ENCODE measurements at regions of chr3 and their contacts with region 1.

Region 1: GRCh38 chr3:125062888-125063618 is 7.3 kb upstream of the HEG1 start:
- DNase-seq: peak; percentile 55
- ATAC-seq: peak; percentile 60

Region 2: DNA sequence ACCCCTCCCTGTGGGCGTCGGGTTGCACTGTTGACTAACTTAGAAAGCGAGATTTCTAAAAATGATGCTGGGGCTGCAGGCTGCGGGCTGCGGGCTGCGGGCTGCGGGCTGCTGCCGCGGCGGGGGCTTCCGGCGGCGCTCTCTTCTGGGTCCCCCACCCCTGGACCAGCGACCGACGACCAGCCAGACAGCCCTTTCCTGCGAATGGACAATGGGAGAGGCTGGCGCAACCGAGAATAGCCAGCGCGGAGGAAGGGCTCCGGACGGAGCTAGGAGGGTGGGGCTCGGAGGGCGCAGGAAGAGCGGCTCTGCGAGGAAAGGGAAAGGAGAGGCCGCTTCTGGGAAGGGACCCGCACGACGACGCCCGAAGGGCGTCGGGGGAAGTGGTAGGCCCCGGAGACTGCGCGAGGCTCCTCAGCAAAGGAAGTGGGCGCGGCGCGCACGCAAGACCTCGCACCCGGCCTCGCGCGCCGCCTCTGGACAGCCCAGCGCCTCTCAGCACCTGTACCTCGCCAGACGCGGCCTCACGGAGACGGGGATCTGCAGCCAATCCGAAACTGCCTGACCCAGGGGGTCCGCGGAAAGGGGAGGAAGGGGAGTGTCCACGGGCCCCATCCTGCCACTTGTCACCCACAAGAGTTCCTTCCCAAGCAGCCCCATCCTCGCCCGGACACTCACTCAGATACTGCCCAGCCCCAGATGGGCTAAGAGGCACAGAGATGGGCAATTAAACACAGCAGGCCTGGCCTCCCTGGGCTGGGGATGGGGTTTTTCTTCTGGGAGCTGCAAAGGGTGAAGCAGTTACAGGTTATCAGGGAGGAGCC is 78.8 kb after region 1 on chr3:
- intact Hi-C with region 1: loop called (anchors 5 kb)
- DNase-seq: peak; percentile 88
- ATAC-seq: peak; percentile 79